ENCODE measurements at regions of chr1 and their contacts with region 1.

Region 1: GRCh38 chr1:89578151-89578550 is 53.5 kb downstream of the LRRC8B start:
- DNase-seq: no peak
- H3K4me3 ChIP-seq: no peak overlapping the region
- CTCF ChIP-seq: no peak

Region 2: DNA sequence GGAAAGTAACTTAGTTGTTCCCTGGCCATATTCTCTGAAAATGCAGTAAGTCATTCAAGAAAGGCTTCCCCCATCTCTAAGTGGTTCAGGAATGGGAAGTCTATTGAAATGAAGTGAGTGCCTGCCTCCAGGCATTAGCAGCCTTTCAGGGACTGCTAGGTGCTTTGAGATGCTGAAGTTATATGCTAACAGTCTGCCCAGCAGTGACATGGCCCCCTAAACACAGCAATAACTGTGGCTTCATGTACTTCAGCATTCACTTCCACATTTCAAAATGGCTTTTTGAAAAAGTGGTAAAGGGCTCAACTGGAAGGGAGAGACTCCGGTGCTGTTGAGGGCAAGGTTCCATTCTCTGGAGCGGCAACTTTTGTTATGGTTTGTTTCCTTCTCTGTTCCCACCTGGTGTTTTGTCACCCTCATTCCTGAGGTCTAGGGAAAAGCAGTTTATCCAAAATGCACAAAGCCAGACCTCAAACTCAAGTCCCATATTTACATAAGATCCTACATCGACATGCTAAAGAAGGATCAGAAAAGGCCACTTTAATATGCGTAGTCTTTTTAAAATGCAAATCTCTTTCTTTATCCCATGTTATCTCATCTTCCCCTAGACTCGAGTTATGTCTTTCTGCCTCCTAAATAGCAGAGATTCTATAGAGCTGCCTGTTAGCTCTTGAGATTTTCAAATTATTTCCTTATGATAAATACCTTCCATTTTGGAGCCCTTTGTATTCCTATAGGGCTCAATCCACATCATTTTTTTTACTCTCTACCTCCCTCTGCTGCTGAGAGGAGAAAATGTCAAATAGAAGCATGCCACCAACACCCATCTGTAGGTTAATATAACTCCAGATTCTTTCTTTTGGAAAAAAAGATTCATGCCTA is 20.5 kb after region 1 on chr1:
- CTCF ChIA-PET with region 1: interaction called, 29 read pairs
- POLR2A ChIA-PET with region 1: no interaction called
- DNase-seq: no peak
- H3K4me3 ChIP-seq: no peak overlapping the region
- CTCF ChIP-seq: peak; percentile 47